ENCODE measurements at regions of chr15 and their contacts with region 1.

Region 1: DNA sequence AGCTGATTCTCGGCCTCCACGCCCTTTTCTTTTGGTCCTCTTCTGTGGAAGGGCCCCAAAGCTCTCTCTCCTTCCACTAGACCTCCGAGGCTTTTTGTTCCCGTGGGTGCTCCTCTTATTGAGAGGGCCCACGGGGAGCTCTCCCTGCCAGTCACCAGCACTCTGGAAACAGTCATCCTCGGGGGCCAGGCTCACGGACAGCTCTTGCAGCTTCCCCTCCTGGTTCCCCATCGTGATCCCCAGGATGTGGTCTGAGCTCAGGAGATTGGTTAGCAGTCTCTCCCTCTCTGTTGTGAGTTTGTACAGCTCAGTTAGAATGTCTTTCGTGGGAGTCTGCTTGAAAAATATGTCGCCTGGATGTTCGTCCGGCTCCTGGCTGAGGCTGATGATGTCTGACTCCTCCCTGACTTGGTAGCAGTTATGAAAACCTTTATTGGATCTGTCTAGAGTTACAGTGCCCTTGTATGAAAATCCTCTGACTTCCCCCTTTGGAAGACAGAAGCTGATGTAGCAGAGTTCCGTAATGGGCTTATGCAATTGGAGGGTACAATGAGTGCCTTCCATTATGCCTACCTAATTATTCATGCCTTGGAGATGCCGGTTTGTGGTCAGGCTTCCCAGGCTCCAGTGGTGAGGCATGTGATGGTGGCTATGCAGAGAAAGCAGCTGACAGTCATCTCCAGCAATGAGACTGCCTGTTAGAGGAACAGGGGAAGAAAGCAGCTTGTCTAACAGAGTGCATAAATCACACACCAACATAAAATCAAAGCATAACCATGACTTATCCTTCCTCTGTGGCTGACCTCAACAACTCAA is 40.0 kb downstream of the FMN1 start:
- DNase-seq: no peak
- H3K4me3 Mint-ChIP-seq: no peak overlapping the region
- H3K27ac Mint-ChIP-seq: no peak overlapping the region
- H3K4me1 Mint-ChIP-seq: peaks cover 3% of the 10 kb centered on the region
- H3K27me3 Mint-ChIP-seq: peaks cover 16% of the 10 kb centered on the region

Region 2: DNA sequence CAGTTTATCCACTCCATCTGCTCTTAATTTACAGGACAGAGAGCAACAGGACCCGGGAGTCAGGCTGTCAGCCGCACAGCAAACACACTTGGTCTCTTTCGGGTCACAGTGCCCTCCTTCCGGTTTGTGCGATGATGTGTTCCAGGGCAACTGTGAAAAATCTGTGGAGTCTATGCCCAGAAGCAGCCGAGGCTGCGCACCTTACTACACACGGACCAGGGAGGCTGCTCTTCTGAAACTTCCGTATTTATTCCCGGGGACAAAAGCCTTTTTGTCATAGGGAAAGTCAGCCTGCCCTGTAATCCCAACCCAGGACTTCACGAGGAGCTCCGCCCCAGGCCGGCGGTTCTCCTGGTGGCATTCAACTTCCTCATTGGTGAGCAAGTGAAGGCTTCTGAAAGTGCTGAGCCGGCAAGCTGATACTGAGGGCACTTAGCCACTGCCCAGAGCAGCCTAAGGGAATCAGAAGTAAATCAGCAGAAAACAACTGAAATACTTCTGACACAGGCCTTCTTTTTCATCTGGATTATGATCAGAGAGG is 86.5 kb before region 1 on chr15:
- intact Hi-C with region 1: no loop called
- DNase-seq: no peak
- H3K4me3 Mint-ChIP-seq: peak overlapping the region; percentile 5
- H3K27ac Mint-ChIP-seq: no peak overlapping the region
- H3K4me1 Mint-ChIP-seq: peaks cover 7% of the 10 kb centered on the region
- H3K27me3 Mint-ChIP-seq: peaks cover 19% of the 10 kb centered on the region

Region 3: DNA sequence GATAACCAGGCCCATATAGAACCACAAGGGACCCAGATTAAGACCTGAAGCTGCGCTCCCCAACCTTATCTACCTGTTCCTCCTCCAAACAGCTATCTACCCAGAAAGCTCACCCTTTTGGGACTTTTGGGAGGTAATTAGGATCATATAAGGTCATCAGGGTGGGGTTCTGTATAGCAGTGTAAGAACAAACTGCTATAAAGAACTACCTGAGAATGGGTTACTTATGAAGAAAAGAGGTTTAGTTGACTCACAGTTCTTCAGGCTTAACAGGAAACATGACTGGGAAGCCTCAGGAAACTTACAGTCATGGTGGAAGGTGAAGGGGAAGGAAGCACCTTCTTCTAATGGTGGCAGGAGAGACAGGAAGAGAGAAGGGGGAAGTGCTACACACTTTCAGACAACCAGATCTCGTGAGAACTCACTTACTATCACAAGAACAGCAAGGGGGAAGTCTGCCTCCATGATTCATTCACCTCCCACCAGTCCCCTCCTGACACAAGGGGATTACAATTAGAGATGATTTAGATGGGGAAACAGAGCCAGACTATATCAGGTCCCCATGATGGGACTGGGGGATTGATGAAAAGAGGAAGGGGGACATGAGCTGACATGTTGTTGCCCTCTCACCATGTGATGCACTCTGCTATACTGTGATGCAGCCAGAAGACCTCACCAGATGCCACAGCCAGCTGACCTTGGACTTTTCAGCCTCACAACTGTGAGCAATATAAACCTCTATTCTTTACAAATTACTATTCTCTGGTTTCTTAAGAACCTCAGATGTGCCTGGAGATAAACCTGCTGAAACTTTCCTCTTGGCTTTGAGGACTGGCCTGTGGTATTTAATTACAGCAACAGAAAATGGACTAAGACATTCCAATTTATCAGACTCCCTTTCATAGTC is 55.3 kb after region 1 on chr15:
- intact Hi-C with region 1: loop called (anchors 5 kb)
- DNase-seq: no peak
- H3K4me3 Mint-ChIP-seq: no peak overlapping the region
- H3K27ac Mint-ChIP-seq: no peak overlapping the region
- H3K4me1 Mint-ChIP-seq: peaks cover 3% of the 10 kb centered on the region
- H3K27me3 Mint-ChIP-seq: peaks cover 18% of the 10 kb centered on the region

Region 4: DNA sequence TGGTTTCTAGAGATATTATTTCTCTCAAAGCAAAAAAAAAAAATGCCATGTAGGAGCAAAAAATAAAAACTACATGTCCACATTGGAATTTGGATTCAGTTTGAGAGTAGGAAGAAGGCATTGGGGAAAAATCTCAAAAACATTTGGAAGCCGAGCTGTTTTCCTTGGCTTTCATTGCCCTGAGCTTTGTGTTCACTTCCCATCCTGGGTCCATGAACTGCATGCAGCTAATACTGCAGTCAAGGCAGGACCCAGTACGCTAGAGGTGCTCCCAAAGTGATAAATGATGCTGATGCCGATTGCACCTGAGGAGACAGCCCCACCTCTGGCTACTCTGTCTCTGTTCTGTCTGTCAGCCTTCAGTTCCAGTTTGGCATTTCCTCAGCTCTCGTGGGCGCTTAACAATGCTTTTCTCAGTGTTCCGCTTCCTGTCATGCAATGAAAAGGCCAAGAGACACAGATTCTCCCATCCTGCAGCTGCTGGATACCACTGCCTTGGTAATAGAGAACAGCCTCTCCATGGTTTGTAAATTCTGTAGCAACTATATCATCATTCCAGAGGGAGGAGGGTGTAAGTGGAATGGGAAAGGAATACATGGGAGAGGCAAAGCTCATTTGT is 338.0 kb after region 1 on chr15:
- intact Hi-C with region 1: no loop called
- DNase-seq: no peak
- H3K4me3 Mint-ChIP-seq: no peak overlapping the region
- H3K27ac Mint-ChIP-seq: no peak overlapping the region
- H3K4me1 Mint-ChIP-seq: no peaks in the 10 kb centered on the region
- H3K27me3 Mint-ChIP-seq: no peaks in the 10 kb centered on the region